ENCODE measurements at regions of chr12 and their contacts with region 1.

Region 1: DNA sequence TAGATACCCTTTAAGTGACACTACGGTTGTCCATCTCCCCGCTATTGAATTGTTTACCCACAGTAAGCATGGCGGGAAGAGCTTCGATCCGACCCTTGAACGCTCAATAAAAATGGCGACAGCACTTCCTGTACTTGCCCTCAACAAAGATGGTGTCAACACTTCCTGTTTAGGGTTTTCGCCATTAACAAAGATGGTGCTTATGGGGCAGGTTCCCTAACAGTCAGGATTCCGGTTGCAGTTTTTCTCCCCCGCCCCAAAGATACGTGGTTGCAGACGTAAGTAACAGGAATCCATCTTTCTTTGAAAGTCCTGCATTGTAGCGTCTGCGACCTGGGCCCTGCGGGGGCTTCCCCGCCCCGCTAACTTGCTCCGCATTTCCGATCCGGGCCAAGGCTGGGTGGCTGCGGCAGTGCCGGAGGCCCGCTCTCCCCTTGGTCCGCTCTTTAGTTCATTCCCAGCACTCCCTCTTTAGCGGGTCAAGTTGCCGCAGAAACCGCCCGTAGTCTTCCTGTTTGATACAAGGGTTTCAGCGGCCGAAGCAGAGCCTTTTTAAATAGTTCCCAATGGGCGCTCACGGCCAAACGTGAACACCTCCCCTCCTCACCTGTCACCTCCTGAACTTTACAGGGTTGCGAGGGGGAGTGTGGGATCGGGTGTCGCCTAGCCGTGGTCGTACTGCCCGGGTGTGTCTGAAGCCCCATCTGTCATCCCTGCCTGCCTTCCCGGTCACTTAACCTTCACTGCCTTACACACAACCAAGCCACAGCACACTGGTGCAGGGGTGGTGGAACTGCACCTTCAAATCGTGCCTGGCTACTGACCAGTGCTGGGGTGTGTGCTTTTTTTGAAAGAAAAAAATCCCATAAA is at the start of gene CRADD:
- DNase-seq: peak; percentile 67 to 83
- ATAC-seq: peak; percentile 81 to 91 (median 86)
- H3K4me3 ChIP-seq: peak within 1 kb of the TSS; percentile 69
- H3K27ac ChIP-seq: peak within 1 kb of the TSS; percentile 99
- H3K4me1 ChIP-seq: peaks cover 44% of the 10 kb centered on the region
- H3K27me3 ChIP-seq: no peaks in the 10 kb centered on the region
- CTCF ChIP-seq: peak; percentile 4
- total RNA-seq, gene CRADD: 12.7 to 21.1 (median 14.7) TPM

Region 2: DNA sequence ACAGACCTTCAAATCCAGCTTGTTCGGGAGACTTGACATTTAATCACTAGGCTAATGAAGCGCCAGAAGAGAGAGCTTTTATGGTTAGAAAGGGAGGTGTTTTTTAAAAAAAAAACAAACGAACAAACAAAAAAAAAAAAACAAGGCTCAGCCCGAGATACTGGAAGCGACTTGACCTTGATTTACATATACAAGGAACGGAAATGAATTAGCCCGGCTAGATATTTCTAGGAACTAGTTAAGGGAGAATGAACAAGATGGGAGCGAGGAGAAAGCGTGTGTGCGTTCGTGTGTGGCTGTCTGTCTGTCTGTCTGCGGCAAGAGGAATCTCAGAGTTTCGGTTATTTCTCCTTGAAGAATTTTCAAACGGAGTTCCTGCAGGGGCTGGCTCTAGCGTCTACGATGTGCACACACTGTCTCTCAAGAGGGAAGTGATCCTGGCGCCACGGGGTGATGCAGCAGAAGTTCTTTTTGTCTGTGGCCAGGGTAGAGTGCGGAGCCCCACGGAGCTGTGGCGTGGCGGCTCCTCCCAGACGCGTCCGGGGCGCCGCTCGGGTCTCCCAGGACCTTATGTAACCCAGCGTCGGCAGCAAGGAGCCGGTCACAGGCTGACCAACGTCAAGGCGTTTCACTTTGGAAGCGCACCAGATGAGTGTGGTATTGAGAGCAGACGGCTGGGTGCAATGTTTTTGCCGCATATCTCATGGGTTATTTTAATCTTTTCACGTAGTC is 86.1 kb before region 1 on chr12:
- intact Hi-C with region 1: loop called (anchors 5 kb)
- DNase-seq: peak; percentile 78 to 88
- ATAC-seq: peak; percentile 88 to 92 (median 88)
- H3K4me3 ChIP-seq: peak overlapping the region; percentile 72
- H3K27ac ChIP-seq: peak overlapping the region; percentile 72
- H3K4me1 ChIP-seq: peaks cover 6% of the 10 kb centered on the region
- H3K27me3 ChIP-seq: no peaks in the 10 kb centered on the region
- CTCF ChIP-seq: no peak

Region 3: DNA sequence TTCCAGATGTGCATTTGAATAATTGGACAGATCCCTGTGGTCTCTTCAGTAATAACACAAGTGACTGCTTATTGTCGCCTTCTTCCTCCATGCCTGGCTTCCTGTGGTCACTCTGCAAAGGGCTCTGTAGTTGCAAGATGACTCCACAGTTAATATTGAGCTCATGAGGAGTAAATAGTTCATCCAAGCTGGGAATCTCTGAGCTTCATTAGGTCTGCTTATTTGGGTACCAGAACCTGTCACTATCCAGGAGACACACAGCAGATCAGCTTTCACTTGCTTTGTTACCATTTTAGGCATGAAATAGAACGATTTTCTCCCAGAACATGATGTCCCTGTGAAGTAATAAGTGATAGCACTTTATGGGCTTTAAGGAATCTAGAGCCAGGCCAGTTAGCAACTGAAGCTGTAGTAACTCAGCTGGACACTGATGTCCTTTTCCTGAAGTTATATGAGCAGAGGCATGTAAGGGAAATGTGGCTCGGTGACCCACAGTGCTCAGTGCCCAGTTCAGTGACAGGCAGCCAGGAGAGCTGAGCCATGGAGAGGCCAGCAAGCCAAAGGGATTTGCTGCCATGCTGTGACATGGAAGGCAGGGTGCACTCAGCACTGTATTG is 49.9 kb after region 1 on chr12:
- intact Hi-C with region 1: loop called (anchors 5 kb)
- DNase-seq: peak; percentile 35 to 73
- ATAC-seq: peak; percentile 89 to 92 (median 90)
- H3K4me3 ChIP-seq: peak overlapping the region; percentile 11
- H3K27ac ChIP-seq: peak overlapping the region; percentile 76
- H3K4me1 ChIP-seq: peaks cover 23% of the 10 kb centered on the region
- H3K27me3 ChIP-seq: no peaks in the 10 kb centered on the region
- CTCF ChIP-seq: no peak

Region 4: DNA sequence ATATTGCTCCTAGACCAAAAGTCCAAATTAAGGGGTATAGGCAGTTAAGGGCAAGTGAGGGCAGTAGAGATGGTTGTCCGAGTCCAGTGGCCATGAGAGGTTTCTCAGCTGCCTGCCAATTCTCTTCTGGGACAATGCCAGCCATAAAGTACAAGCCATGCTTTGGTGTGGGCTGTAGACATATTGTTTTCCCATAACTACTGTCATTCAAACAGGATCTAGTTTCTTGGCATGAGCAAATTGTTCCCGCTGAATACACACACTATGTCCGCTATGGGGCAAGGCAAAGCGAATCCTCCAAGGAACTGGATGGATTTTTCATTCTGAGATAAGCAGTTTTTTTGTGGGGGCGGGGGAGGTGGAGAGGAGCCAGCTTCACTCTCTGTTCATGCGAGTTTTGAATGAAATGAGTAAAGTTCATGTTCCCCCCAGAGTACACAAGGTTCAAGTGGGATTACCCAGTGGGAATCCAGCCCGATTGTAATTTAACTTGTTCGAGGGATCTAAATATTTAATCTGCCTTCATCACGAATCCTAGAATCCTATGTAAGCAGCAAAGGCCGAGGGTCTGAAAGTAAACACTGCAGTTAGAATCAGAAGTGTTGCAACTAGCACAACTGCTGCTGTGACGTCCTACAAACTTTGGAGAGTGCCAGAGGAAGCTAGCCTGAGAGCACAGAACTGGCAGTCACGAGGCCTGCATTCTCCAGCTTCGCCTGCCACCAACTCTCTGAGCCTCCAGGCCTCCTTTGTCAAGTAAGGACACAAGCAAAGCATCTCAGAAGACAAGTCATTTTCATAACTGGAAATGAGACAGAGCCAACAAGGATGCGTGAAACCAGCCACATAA is 136.8 kb after region 1 on chr12:
- intact Hi-C with region 1: loop called in 1 of 2 experiments (anchors 10 kb)
- DNase-seq: peak; percentile 81 to 90
- ATAC-seq: peak; percentile 91 to 94 (median 93)
- H3K4me3 ChIP-seq: peak overlapping the region; percentile 58
- H3K27ac ChIP-seq: peak overlapping the region; percentile 95
- H3K4me1 ChIP-seq: peaks cover 40% of the 10 kb centered on the region
- H3K27me3 ChIP-seq: no peaks in the 10 kb centered on the region
- CTCF ChIP-seq: no peak

Region 5: DNA sequence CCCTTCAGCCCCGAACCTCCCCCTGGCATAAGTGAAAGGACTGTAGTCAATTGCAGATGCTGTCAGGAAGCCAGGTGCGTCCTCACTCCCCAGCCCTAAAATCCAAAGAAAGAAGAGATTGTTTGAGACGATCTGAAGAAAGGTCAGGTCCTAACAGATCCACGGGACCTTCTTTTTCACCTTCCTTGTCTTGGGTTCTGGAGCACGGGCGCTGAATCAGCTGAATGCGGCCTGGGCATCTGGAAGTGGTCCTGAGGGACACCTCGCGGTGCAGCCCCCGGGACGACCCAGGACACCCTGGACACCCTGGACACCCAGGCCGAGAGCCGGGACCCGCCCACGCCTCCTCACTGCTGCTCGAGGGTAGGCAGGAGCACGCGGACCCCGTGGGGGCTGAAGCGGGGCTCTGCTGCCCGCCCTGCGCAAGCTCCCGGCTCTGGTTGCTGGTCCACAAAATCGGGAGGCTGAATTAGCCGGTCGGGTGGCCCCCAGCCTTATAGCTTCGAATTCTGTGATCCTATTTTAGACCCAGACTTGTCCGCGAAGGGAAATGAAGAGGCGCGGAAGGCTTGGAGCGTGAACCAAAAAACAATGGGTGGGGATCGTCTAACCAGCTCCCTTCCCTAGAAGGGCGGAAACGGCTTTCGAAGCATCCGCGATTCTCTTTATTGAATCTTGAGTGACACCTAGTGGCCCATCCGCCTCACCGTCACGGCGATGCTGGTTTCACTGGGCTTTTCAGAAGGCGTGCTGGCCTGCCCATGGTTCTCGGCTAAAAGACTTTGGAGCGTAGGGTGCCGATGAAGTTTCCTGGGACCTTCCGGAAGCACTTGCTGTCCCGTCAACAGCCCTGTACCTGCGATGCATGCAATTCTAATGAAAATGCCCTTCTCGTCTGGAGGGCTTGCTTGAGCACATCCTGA is 424.6 kb after region 1 on chr12:
- intact Hi-C with region 1: loop called in 1 of 2 experiments (anchors 1 kb)
- DNase-seq: peak; percentile 82 to 89
- ATAC-seq: peak; percentile 83 to 92 (median 84)
- H3K4me3 ChIP-seq: peak overlapping the region; percentile 72
- H3K27ac ChIP-seq: no peak overlapping the region
- H3K4me1 ChIP-seq: peaks cover 6% of the 10 kb centered on the region
- H3K27me3 ChIP-seq: peaks cover 0 to 3% (median 0%) of the 10 kb centered on the region in 3 donors
- CTCF ChIP-seq: peak; percentile 84

Measured in psoas muscle (tissue), 8 donors.